Heart left ventricle (tissue), 16 donors: ENCODE measurements at regions of chr6 and their contacts with region 1.

Region 1: DNA sequence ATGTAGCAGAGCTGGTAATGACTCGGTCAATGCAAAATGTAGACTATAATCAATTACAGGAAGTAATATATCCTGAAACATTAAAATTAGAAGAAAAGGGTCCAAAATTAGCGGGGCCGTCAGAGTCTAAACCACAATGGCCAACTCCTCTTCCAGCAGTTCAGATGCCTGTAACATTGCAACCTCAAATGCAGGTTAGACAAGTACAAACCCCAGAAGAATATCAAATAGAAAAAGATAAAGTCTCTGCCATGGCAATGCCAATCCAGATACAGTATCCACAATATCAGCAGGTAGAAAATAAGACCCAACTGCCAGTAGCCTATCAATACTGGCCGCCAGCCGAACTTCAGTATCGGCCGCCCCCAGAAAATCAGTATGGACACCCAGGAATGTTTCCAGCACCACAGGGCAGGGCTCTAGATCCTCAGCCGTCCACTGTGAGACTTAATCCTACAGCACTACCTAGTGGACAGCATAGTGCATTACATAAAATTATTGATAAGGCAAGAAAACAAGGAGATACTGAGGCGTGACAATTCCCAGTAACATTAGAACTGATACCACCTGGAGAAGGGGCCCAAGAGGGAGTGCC is 158.4 kb downstream of the GPX5 start:
- DNase-seq: no peak
- ATAC-seq: no peak
- H3K4me3 ChIP-seq: peak overlapping the region in 2 of 12 donors; percentile 9 to 16
- H3K27ac ChIP-seq: no peak overlapping the region
- H3K4me1 ChIP-seq: no peaks in the 10 kb centered on the region
- H3K27me3 ChIP-seq: peaks cover 0 to 74% (median 28%) of the 10 kb centered on the region in 9 donors
- CTCF ChIP-seq: peak in 11 of 12 donors; percentile 27 to 54 (median 39)
- POLR2A ChIP-seq: no peak

Region 2: DNA sequence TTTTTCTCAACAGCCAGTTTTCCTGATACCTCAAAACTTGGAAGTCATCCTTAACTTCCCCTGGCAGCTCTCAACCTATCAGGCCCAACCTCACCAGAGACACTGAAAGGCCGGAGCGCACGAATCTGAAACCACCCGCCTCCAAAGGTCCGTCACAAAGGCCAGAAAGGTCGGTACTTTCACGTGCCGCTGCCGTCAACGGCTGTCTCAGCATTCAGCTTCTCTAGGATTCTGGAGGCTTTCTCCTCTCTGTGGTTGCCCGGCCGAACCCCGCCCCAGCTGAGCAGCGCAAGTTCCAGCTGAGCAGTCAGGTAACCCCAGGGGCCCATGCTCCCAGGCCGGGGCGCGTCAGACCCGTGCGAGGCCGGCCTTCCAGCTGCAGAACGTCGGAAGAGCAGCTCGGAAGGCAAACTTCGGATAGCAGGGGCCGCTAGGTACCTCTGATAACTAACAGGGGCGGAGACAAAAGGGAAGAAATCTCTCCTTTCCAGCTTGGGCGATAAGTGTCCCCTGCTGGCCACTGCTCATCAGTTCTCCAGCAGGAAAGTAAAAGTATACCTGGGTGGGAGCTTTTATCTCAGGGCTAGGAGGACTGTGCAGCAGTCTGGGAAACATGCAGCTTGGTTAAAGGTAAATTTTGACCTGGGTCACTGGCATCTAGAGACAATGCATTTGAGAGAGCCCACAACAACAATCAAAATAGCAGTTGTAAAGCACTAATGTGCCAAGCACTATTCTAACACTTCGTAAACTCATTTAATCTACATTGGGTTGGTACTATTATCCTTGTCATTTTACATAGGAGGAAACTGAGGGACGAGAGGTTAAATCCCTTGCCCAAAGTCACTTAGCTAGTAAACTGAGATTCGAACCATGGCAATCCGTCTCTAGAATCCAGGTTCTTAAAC is 300.6 kb before region 1 on chr6:
- intact Hi-C with region 1: loop called in 1 of 10 experiments (anchors 10 kb)
- DNase-seq: peak; percentile 83 to 93 (median 88)
- ATAC-seq: peak; percentile 92 to 99 (median 98)
- H3K4me3 ChIP-seq: peak overlapping the region; percentile 24 to 67 (median 54)
- H3K27ac ChIP-seq: peak overlapping the region; percentile 25 to 79 (median 68)
- H3K4me1 ChIP-seq: peaks cover 0 to 30% (median 7%) of the 10 kb centered on the region in 12 donors
- H3K27me3 ChIP-seq: no peaks in the 10 kb centered on the region
- CTCF ChIP-seq: peak in 11 of 12 donors; percentile 11 to 43 (median 26)
- POLR2A ChIP-seq: peak in 1 of 2 donors; percentile 13

Region 3: GRCh38 chr6:28586962-28587745 is 96.9 kb before region 1 on chr6:
- intact Hi-C with region 1: no loop called
- DNase-seq: peak; percentile 19 to 62 (median 55)
- ATAC-seq: peak; percentile 78 to 97 (median 92)
- H3K4me3 ChIP-seq: peak overlapping the region; percentile 11 to 72 (median 54)
- H3K27ac ChIP-seq: no peak overlapping the region
- H3K4me1 ChIP-seq: peaks cover 0 to 20% (median 0%) of the 10 kb centered on the region in 12 donors
- H3K27me3 ChIP-seq: peaks cover 0 to 92% (median 40%) of the 10 kb centered on the region in 9 donors
- CTCF ChIP-seq: no peak
- POLR2A ChIP-seq: no peak

Region 4: GRCh38 chr6:28940858-28941680 is 257.0 kb after region 1 on chr6:
- intact Hi-C with region 1: loop called in 1 of 10 experiments (anchors 2 kb)
- DNase-seq: peak in 4 of 5 donors; percentile 72 to 83 (median 80)
- ATAC-seq: peak; percentile 74 to 92 (median 82)
- H3K4me3 ChIP-seq: peak overlapping the region; percentile 42 to 70 (median 64)
- H3K27ac ChIP-seq: peak overlapping the region; percentile 36 to 85 (median 69)
- H3K4me1 ChIP-seq: peaks cover 0 to 33% (median 8%) of the 10 kb centered on the region in 12 donors
- H3K27me3 ChIP-seq: no peaks in the 10 kb centered on the region
- CTCF ChIP-seq: no peak
- POLR2A ChIP-seq: no peak

Region 5: GRCh38 chr6:29016559-29017427 is 332.8 kb after region 1 on chr6:
- intact Hi-C with region 1: loop called (anchors 1 to 5 kb)
- DNase-seq: peak; percentile 66 to 83 (median 79)
- ATAC-seq: peak; percentile 67 to 97 (median 92)
- H3K4me3 ChIP-seq: peak overlapping the region; percentile 7 to 70 (median 54)
- H3K27ac ChIP-seq: peak overlapping the region in 2 of 12 donors; percentile 26 to 55
- H3K4me1 ChIP-seq: peaks cover 0 to 11% (median 2%) of the 10 kb centered on the region in 12 donors
- H3K27me3 ChIP-seq: peaks cover 3 to 66% (median 37%) of the 10 kb centered on the region in 9 donors
- CTCF ChIP-seq: peak; percentile 75 to 90 (median 80)
- POLR2A ChIP-seq: no peak

Region 6: DNA sequence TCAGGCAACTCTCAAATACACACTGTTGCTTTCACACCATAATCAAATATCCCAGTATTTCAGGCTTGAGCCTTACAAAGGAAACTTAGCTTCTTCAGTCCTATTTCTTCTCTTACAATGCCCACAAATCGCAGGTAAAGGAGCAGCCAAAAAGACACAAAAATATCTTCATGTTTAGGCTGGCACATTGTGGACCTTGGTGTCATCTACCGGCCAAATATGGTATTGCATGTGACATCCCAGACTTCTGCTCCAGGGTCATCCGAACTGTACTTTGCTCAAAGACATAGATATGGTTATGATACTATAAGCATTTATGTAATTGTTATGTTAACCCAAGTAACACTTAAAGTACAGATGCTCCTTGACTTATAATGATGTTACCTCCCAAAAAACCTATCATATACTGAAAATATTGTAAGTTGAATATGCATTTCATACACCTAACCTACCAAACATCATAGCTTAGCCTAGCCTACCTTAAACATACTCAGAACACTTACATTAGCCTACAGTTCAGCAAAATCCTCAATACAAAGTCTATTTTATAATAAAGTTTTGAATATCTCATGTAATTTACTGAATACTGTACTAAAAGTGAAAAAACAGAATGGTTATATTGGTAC is 905.5 kb after region 1 on chr6:
- intact Hi-C with region 1: loop called in 9 of 10 experiments (anchors 2 to 5 kb)
- DNase-seq: peak in 1 of 5 donors; percentile 28
- ATAC-seq: peak in 3 of 4 donors; percentile 63 to 72 (median 63)
- H3K4me3 ChIP-seq: no peak overlapping the region
- H3K27ac ChIP-seq: no peak overlapping the region
- H3K4me1 ChIP-seq: peaks cover 0 to 7% (median 0%) of the 10 kb centered on the region in 12 donors
- H3K27me3 ChIP-seq: peaks cover 0 to 21% (median 4%) of the 10 kb centered on the region in 9 donors
- CTCF ChIP-seq: peak; percentile 82 to 97 (median 94)
- POLR2A ChIP-seq: no peak